A549 (cell line): ENCODE measurements at regions of chr2 and their contacts with region 1.

Region 1: GRCh38 chr2:137826373-137827372 is 137.6 kb upstream of the HNMT start:
- DNase-seq: no peak
- ATAC-seq: no peak
- H3K4me3 ChIP-seq: no peak overlapping the region
- H3K27ac ChIP-seq: no peak overlapping the region
- H3K4me1 ChIP-seq: no peaks in the 10 kb centered on the region
- CTCF ChIP-seq: no peak
- EP300 ChIP-seq: no peak
- POLR2A ChIP-seq: no peak
- RAD21 ChIP-seq: no peak

Region 2: GRCh38 chr2:137838255-137839092 is 11.8 kb after region 1 on chr2:
- CTCF ChIA-PET with region 1: interaction called, 18 read pairs
- POLR2A ChIA-PET with region 1: no interaction called
- DNase-seq: peak; percentile 33 to 45
- ATAC-seq: peak; percentile 63 to 84; a peak in 4 of 6 replicates
- H3K4me3 ChIP-seq: no peak overlapping the region
- H3K27ac ChIP-seq: no peak overlapping the region
- H3K4me1 ChIP-seq: no peaks in the 10 kb centered on the region
- CTCF ChIP-seq: peak; percentile 85
- EP300 ChIP-seq: no peak
- POLR2A ChIP-seq: no peak
- RAD21 ChIP-seq: peak; percentile 87 to 88